Cardiac septum (tissue), 1 donor: ENCODE measurements at regions of chr19 and their contacts with region 1.

Region 1: GRCh38 chr19:39480337-39481228 is at the start of gene TIMM50:
- DNase-seq: peak; percentile 98
- total RNA-seq, gene TIMM50: 62.0 TPM

Region 2: DNA sequence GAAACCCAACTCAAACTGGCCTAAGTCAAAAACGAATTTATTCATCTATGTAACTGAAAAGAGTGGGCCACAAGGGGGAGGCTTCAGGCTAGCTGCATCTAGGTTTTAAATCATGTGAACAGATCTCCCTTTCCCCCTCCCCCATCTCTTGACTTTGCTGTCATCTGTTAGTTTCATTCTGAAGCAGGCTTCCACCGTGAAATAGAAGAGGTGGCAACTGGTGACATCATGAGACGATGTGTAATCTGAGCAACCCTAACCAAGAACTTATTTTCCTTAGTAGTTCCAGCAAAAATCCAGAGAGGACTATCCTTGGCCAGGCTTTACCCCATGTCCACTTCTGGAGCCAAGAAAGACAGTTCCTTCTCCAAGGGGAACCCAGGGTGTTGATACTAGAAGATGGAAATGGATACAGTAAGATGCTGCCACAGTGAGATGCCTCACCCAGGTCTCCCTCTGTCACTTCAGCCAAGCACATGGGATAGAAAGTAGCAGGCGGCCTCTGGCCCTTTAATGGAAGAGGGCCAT is 129.0 kb before region 1 on chr19:
- intact Hi-C with region 1: no loop called
- DNase-seq: no peak

Region 3: DNA sequence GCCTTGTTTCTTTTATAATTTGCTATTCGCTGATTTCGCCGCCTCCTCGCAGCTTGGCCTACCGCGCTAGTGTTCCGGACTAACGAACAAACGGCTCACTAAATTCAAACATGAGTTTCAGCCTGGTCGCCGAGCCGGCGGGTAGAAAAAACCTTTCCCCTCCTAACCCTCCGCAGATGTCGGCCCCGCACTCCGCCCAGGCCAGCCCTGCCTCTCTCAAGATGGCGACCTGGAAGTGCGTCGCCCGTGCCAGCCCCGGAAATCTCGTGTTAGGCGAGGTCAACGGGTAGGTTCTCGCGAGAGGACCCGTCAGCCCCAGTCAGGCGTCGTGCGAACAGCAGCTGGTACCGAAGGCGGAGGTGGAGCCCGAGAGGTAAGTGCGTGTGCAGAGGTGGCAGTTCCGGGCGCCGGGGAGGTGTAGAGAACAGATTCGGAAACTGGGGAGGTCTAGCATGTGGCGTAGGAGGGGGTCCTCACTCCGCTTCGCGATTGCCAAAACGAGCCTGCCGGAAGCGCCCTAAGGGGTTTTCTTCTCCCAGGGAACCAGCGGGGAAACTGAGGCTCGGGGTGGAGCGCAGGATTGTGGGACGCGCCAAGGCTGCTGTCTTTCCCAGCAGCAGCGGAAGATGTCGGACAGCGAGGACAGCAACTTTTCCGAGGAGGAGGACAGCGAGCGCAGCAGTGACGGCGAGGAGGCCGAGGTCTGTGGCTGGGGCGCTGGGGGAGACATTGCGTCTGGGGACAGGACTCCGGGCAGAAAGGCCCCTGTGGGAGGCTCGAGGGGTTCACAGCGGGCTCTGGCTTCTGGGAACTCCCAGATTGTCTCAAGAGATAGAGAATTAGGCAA is 35.1 kb before region 1 on chr19 and contains the start of gene SUPT5H:
- intact Hi-C with region 1: loop called (anchors 5 kb)
- DNase-seq: peak; percentile 98
- total RNA-seq, gene SUPT5H: 79.9 TPM

Region 4: GRCh38 chr19:39539519-39540332 is 59.1 kb after region 1 on chr19 and contains the start of gene EID2:
- intact Hi-C with region 1: loop called (anchors 2 kb)
- DNase-seq: peak; percentile 96
- total RNA-seq, gene EID2: 11.4 TPM